IMR-90 (cell line): ENCODE measurements at regions of chr1 and their contacts with region 1.

Region 1: GRCh38 chr1:69513621-69514020 is 54.1 kb upstream of the LRRC7 start:
- DNase-seq: peak; percentile 28
- ATAC-seq: no peak
- H3K4me3 ChIP-seq: no peak overlapping the region
- H3K27ac ChIP-seq: no peak overlapping the region
- H3K4me1 ChIP-seq: no peaks in the 10 kb centered on the region
- H3K27me3 ChIP-seq: no peaks in the 10 kb centered on the region
- CTCF ChIP-seq: no peak
- POLR2A ChIP-seq: no peak
- RAD21 ChIP-seq: no peak

Region 2: GRCh38 chr1:69479734-69480133 is 33.9 kb before region 1 on chr1:
- CTCF ChIA-PET with region 1: no interaction called
- POLR2A ChIA-PET with region 1: no interaction called
- dilution Hi-C with region 1: no loop called
- in situ Hi-C with region 1: no loop called
- intact Hi-C with region 1: loop called (anchors 2 kb)
- DNase-seq: no peak
- ATAC-seq: no peak
- H3K4me3 ChIP-seq: no peak overlapping the region
- H3K27ac ChIP-seq: no peak overlapping the region
- H3K4me1 ChIP-seq: no peaks in the 10 kb centered on the region
- H3K27me3 ChIP-seq: no peaks in the 10 kb centered on the region
- CTCF ChIP-seq: no peak
- POLR2A ChIP-seq: no peak
- RAD21 ChIP-seq: no peak

Region 3: GRCh38 chr1:69567652-69568420 is 54.2 kb after region 1 on chr1 and contains the start of gene LRRC7:
- CTCF ChIA-PET with region 1: no interaction called
- POLR2A ChIA-PET with region 1: no interaction called
- dilution Hi-C with region 1: no loop called
- in situ Hi-C with region 1: no loop called
- intact Hi-C with region 1: no loop called
- DNase-seq: no peak
- ATAC-seq: peak; percentile 45; the same call in 1 of the 2 replicates
- H3K4me3 ChIP-seq: peak within 1 kb of the TSS; percentile 9; the same call in 1 of the 2 replicates
- H3K27ac ChIP-seq: no peak within 1 kb of the TSS
- H3K4me1 ChIP-seq: peaks cover 3% of the 10 kb centered on the region; the same call in 1 of the 2 replicates
- H3K27me3 ChIP-seq: peaks cover 36% of the 10 kb centered on the region
- CTCF ChIP-seq: no peak
- POLR2A ChIP-seq: no peak
- RAD21 ChIP-seq: no peak
- total RNA-seq, gene LRRC7: under 0.01 TPM in 2 replicates

Region 4: DNA sequence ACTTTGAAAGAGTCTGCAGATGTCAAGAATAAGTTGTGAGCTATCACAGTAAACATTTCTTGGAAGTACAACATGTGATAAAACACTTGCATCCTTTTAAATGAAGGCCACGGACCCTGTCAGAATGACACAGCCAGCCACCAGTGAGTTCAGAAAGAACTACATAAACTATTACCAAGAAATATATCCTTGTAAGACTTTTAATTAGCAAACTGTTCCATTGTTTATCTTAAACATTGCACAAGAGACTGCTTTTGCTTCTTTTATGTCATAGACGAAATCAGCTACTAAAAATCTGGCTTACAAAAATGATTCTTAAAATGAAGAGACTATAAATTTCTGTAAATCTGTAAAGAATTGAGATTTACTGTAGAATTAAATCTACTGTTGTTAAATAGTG is 72.0 kb after region 1 on chr1:
- CTCF ChIA-PET with region 1: no interaction called
- POLR2A ChIA-PET with region 1: no interaction called
- dilution Hi-C with region 1: no loop called
- in situ Hi-C with region 1: no loop called
- intact Hi-C with region 1: no loop called
- DNase-seq: no peak
- ATAC-seq: no peak
- H3K4me3 ChIP-seq: no peak overlapping the region
- H3K27ac ChIP-seq: no peak overlapping the region
- H3K4me1 ChIP-seq: no peaks in the 10 kb centered on the region
- H3K27me3 ChIP-seq: no peaks in the 10 kb centered on the region
- CTCF ChIP-seq: no peak
- POLR2A ChIP-seq: no peak
- RAD21 ChIP-seq: no peak

Region 5: DNA sequence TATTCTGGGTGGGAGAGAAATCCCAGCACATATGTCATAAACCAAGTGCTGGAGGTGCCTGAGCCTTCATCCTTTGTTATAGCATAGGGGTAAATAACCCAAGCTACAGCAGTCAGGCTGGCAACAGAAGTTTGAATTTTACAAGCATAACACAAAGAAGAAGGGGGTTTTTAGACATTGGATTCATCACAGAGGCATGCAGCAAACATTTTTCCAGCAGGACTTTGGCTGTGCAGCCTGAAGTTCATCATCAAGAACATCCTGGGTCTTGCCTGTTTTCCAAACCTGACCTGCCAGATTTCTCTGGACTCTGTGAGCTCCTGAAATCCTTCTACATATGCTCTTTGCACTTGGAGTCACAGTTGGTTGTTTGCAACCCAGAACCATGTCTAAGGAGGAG is 1517.8 kb after region 1 on chr1:
- CTCF ChIA-PET with region 1: no interaction called
- POLR2A ChIA-PET with region 1: no interaction called
- dilution Hi-C with region 1: no loop called
- in situ Hi-C with region 1: no loop called
- intact Hi-C with region 1: no loop called
- DNase-seq: peak; percentile 11
- ATAC-seq: no peak; the same call in 1 of the 2 replicates
- H3K4me3 ChIP-seq: no peak overlapping the region
- H3K27ac ChIP-seq: no peak overlapping the region
- H3K4me1 ChIP-seq: no peaks in the 10 kb centered on the region
- H3K27me3 ChIP-seq: no peaks in the 10 kb centered on the region
- CTCF ChIP-seq: no peak
- POLR2A ChIP-seq: no peak
- RAD21 ChIP-seq: no peak